Ascending aorta (tissue), 2 donors: ENCODE measurements at regions of chr10 and their contacts with region 1.

Region 1: GRCh38 chr10:80408242-80409101 is at the start of gene PRXL2A:
- DNase-seq: peak; percentile 18 to 86
- H3K4me3 ChIP-seq: peak within 1 kb of the TSS; percentile 72 to 90
- H3K27ac ChIP-seq: peak within 1 kb of the TSS; percentile 62 to 76
- H3K4me1 ChIP-seq: peaks cover 0 to 7% of the 10 kb centered on the region in 2 donors
- H3K27me3 ChIP-seq: no peaks in the 10 kb centered on the region
- CTCF ChIP-seq: no peak
- total RNA-seq, gene PRXL2A: 22.7 TPM

Region 2: DNA sequence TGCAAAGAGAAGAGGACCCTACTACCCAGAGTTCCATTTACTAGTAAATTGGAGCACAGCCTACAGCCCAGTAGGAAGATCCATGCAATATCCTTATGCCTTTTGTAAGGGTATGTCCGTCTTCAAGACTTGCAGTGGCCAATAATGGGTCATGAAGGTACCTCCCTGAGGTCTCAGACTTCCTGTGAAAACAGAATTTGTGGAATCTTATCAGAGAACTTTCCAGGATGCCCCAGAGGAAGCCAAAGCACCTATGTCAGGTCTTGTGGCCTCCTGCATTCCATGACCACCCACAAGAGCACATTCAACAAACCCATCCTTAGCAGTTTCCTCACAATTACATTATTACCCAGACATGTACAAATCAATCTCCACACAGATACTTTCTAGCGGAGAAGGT is 18.7 kb before region 1 on chr10:
- intact Hi-C with region 1: loop called (anchors 2 kb)
- DNase-seq: no peak
- H3K4me3 ChIP-seq: no peak overlapping the region
- H3K27ac ChIP-seq: no peak overlapping the region
- H3K4me1 ChIP-seq: peaks cover 13 to 31% of the 10 kb centered on the region in 2 donors
- H3K27me3 ChIP-seq: no peaks in the 10 kb centered on the region
- CTCF ChIP-seq: no peak